ENCODE measurements at regions of chr21 and their contacts with region 1.

Region 1: DNA sequence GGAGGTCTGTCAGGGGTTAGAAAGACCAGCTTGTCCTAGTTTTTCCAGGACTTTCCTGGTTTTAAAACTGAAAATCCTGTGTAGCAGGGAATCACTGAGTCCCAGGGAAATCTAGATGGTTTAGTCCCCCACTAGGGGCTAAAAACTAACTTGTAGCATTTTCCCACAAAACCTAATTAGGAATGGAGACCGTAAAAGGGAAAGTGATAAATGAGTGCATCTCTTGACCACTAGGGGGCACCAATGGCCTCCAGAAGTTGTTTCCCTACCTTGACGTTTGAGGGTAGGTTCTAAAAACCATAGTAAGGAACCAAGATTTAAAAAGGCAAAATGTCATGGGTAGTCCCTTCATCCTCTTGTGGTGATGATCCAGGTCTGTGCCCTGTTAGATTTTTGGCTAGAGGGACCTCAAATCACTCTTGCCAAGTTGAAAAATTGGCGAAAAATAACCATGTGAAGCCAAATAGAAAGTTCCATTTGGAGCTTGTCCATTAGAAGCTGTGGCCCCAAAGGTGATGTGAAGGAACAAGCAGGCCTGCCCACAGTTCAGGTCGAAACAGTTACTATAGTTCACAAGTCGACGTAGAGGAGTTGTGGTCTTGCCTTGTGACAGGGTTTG is 24.5 kb downstream of the CLIC6 start:
- DNase-seq: peak; percentile 78
- H3K4me3 Mint-ChIP-seq: no peak overlapping the region
- H3K27ac Mint-ChIP-seq: no peak overlapping the region
- H3K4me1 Mint-ChIP-seq: no peaks in the 10 kb centered on the region
- H3K27me3 Mint-ChIP-seq: no peaks in the 10 kb centered on the region
- CTCF ChIP-seq: peak; percentile 77

Region 2: DNA sequence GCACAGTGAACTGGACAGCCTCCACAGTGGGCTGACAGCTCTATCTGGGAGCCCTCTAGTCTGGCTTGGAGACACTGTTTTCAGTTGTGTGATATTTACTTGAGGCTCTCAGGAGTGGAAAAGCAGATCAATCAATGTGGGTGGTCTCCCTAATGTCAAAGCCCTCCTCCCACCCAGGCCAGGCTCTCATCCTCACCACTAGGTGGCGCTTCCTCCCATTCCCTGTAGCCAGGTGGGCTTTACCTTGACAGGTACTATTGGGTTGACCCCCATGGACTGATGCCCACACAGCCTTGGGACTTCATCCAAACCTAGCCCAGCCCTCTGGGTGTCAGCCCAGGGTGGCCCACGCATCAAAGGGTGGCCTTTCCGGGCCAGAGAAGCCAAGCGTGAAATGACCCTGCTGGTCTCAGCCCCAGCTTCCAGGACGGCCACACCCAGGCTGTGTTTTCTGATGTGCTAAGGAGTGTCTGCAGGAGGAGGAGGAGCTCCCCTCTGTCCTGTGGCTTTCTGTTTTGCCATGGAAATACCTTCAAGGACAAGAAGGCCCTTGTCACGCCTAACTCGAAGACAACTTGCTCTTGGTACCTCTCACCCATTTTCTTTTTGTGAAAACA is 29.5 kb after region 1 on chr21:
- CTCF ChIA-PET with region 1: interaction called, 16 read pairs
- POLR2A ChIA-PET with region 1: no interaction called
- intact Hi-C with region 1: no loop called
- DNase-seq: peak; percentile 27
- H3K4me3 Mint-ChIP-seq: no peak overlapping the region
- H3K27ac Mint-ChIP-seq: no peak overlapping the region
- H3K4me1 Mint-ChIP-seq: peaks cover 9% of the 10 kb centered on the region
- H3K27me3 Mint-ChIP-seq: no peaks in the 10 kb centered on the region
- CTCF ChIP-seq: peak; percentile 68

Region 3: DNA sequence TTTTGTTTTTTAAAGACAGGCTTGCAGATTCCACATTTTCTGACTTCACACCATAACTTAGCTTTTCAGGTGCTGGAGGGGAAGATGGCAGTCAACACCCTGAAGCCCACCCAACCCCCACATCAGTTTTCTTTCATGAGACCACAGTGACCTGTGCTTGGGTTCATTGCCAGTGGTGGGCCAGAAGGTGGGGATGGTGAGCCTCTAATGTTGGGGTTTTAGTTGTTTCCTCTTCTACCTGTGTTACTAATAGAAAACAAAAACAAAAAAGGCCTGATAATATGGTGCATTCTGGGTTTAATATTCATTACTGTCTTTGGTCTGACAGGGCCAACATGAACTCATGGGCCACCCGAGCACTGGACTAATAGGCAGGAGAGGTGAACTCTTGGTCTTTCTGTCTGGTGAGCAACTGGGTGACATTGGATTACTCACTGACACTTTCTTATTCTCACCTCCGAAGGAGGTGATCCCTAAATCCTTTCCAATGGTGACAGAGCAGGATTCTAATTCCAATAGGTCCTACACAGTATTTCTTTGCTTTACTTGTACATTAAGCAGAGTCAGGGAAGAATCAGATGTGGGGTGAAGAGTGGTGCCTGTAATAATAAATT is 108.3 kb after region 1 on chr21:
- CTCF ChIA-PET with region 1: interaction called, 9 read pairs
- POLR2A ChIA-PET with region 1: interaction called, 7 read pairs
- intact Hi-C with region 1: loop called (anchors 5 kb)
- DNase-seq: peak; percentile 52
- H3K4me3 Mint-ChIP-seq: no peak overlapping the region
- H3K27ac Mint-ChIP-seq: peak overlapping the region; percentile 88
- H3K4me1 Mint-ChIP-seq: peaks cover 45% of the 10 kb centered on the region
- H3K27me3 Mint-ChIP-seq: no peaks in the 10 kb centered on the region
- CTCF ChIP-seq: peak; percentile 24

Region 4: GRCh38 chr21:35051287-35051818 is 358.1 kb after region 1 on chr21:
- CTCF ChIA-PET with region 1: interaction called, 6 read pairs
- POLR2A ChIA-PET with region 1: no interaction called
- intact Hi-C with region 1: loop called (anchors 2 kb)
- DNase-seq: peak; percentile 95
- H3K4me3 Mint-ChIP-seq: no peak overlapping the region
- H3K27ac Mint-ChIP-seq: peak overlapping the region; percentile 83
- H3K4me1 Mint-ChIP-seq: peaks cover 48% of the 10 kb centered on the region
- H3K27me3 Mint-ChIP-seq: no peaks in the 10 kb centered on the region
- CTCF ChIP-seq: peak; percentile 73

Region 5: DNA sequence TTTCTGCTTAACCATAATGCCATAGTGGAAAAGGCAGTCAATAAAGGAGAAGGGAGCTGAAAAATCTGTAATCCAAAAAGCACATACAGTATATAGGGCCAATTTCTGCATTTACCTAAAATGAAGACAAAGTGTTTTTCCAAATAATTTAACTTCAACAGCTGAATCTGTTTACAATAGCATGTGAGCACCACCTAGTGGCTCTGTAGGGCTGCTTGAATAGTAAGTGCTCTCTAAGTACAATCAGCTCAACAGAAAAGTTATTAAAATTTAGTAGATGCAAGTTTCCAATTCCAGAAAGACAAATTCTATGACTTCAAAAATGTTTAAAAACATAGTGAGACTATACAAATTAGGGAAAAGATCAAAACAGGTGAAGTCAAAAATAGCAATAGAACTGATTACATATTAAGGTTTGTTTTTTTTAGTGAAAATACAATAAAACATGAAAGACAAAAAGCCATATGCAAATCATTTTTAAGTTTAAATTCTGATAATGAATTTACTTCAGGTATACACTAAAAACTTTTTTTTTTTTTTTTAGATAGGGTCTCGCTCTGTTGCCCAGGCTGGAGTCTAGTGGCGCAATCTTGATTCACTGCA is 1147.0 kb after region 1 on chr21:
- CTCF ChIA-PET with region 1: interaction called, 6 read pairs
- POLR2A ChIA-PET with region 1: interaction called, 3 read pairs
- intact Hi-C with region 1: loop called (anchors 1 kb)
- DNase-seq: peak; percentile 72
- H3K4me3 Mint-ChIP-seq: no peak overlapping the region
- H3K27ac Mint-ChIP-seq: no peak overlapping the region
- H3K4me1 Mint-ChIP-seq: no peaks in the 10 kb centered on the region
- H3K27me3 Mint-ChIP-seq: no peaks in the 10 kb centered on the region
- CTCF ChIP-seq: peak; percentile 78